PC-9 (cell line): ENCODE measurements at regions of chr13 and their contacts with region 1.

Region 1: GRCh38 chr13:77506874-77507273 is 28.6 kb upstream of the SCEL start:
- DNase-seq: no peak
- H3K4me3 ChIP-seq: peak overlapping the region; percentile 42; the same call in 1 of the 2 replicates
- H3K27ac ChIP-seq: peak overlapping the region; percentile 71
- H3K4me1 ChIP-seq: peaks cover 37% of the 10 kb centered on the region
- H3K27me3 ChIP-seq: no peaks in the 10 kb centered on the region
- CTCF ChIP-seq: peak; percentile 59

Region 2: GRCh38 chr13:77026818-77027585 is 479.9 kb before region 1 on chr13 and contains the start of gene FBXL3:
- CTCF ChIA-PET with region 1: no interaction called
- POLR2A ChIA-PET with region 1: no interaction called
- intact Hi-C with region 1: loop called (anchors 5 kb)
- DNase-seq: peak; percentile 75 to 78
- H3K4me3 ChIP-seq: peak within 1 kb of the TSS; percentile 95
- H3K27ac ChIP-seq: peak within 1 kb of the TSS; percentile 89
- H3K4me1 ChIP-seq: peaks cover 45% of the 10 kb centered on the region
- H3K27me3 ChIP-seq: no peaks in the 10 kb centered on the region
- CTCF ChIP-seq: no peak
- total RNA-seq, gene FBXL3: 20.3 and 22.0 TPM in 2 replicates

Region 3: DNA sequence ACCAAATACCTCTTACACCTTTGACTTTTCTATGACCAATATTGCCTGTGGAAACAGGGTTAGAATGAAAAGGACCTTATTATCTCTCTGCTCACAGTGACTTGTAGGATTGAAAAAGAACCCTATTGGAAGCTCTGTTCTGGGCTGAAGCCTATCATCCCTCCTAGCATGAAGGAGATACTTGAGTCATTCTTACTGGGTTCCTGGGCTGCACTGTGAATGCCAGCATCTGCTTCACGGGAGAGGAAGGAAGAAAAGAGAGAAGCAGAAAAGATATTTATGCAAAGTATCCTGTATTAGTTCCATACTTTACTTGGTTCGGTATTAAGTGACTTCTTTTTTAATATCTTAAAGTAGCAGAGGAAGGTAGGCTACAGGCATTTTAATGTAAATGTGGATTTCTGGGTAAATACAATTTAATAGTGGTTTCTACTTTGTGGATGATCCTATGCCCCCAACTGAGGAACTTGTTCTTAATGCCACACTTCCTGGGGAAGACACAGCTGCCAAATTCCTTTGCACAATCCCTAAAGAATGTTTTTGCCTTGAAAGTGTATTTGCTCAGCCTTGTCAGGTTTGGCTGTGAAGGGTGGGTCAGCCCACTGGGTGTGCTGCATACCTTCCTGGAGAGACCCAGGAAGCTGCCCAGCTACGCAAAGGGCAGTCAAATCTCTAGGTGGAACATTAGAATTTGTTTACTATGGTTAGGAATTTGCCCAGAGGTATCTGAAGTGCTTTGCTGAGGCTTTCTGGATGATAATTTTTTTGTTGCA is 14.9 kb after region 1 on chr13:
- CTCF ChIA-PET with region 1: no interaction called
- POLR2A ChIA-PET with region 1: no interaction called
- intact Hi-C with region 1: loop called (anchors 1 kb)
- DNase-seq: peak; percentile 86 to 98
- H3K4me3 ChIP-seq: peak overlapping the region; percentile 35; the same call in 1 of the 2 replicates
- H3K27ac ChIP-seq: peak overlapping the region; percentile 97
- H3K4me1 ChIP-seq: peaks cover 59% of the 10 kb centered on the region
- H3K27me3 ChIP-seq: no peaks in the 10 kb centered on the region
- CTCF ChIP-seq: peak; percentile 22; the same call in 1 of the 2 replicates

Region 4: DNA sequence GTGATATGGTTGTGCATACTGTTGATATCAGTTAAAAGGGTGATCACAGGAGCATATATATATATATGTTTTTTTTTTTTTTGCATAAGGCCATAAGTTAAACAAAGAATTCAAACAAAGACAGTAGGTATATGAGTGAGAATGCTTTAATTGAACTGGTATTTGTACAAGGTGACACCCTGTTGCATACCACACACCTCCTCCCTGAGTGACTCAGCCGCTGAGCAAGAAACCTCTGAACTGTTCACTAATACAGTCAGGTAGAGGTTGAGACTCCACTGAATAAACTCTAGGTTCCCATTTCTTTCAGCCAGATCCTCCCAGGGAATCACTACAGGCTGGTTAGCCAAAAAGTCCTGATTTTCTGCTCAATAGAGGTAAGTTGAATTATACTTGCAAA is 28.6 kb after region 1 on chr13 and contains the start of gene SCEL:
- CTCF ChIA-PET with region 1: interaction called, 8 read pairs
- POLR2A ChIA-PET with region 1: interaction called, 12 read pairs
- intact Hi-C with region 1: loop called (anchors 1 kb)
- DNase-seq: peak; percentile 65 to 93
- H3K4me3 ChIP-seq: peak within 1 kb of the TSS; percentile 61
- H3K27ac ChIP-seq: peak within 1 kb of the TSS; percentile 92
- H3K4me1 ChIP-seq: peaks cover 61% of the 10 kb centered on the region
- H3K27me3 ChIP-seq: no peaks in the 10 kb centered on the region
- CTCF ChIP-seq: no peak
- total RNA-seq, gene SCEL: 19.5 and 32.5 TPM in 2 replicates

Region 5: DNA sequence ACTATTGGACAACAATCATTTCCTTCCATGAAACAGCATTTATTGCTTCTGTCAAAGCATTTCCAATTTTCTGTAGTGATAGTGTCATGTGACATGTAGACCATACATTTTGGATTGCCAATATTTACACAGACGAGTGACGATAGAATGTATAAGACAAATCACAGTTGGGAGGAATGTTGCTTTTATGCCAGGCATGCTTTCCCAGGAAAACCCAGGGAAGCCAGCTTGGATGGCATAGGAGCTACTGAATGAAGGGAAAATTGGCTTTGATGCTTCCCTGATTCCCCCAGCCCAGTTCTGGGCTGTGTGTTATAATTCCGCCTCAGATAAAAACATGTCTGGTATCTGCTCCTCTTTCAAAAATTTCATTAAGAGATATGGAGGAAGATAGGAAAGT is 51.1 kb after region 1 on chr13:
- CTCF ChIA-PET with region 1: no interaction called
- POLR2A ChIA-PET with region 1: no interaction called
- intact Hi-C with region 1: loop called (anchors 1 kb)
- DNase-seq: no peak
- H3K4me3 ChIP-seq: no peak overlapping the region
- H3K27ac ChIP-seq: peak overlapping the region; percentile 37; the same call in 1 of the 2 replicates
- H3K4me1 ChIP-seq: peaks cover 50% of the 10 kb centered on the region
- H3K27me3 ChIP-seq: no peaks in the 10 kb centered on the region
- CTCF ChIP-seq: no peak

Region 6: GRCh38 chr13:77565635-77566034 is 58.8 kb after region 1 on chr13:
- CTCF ChIA-PET with region 1: no interaction called
- POLR2A ChIA-PET with region 1: no interaction called
- intact Hi-C with region 1: loop called (anchors 1 kb)
- DNase-seq: peak in 1 of 2 experiments; percentile 50
- H3K4me3 ChIP-seq: no peak overlapping the region
- H3K27ac ChIP-seq: no peak overlapping the region
- H3K4me1 ChIP-seq: no peaks in the 10 kb centered on the region; the same call in 1 of the 2 replicates
- H3K27me3 ChIP-seq: no peaks in the 10 kb centered on the region
- CTCF ChIP-seq: peak; percentile 81